ENCODE measurements at regions of chr19 and their contacts with region 1.

Region 1: DNA sequence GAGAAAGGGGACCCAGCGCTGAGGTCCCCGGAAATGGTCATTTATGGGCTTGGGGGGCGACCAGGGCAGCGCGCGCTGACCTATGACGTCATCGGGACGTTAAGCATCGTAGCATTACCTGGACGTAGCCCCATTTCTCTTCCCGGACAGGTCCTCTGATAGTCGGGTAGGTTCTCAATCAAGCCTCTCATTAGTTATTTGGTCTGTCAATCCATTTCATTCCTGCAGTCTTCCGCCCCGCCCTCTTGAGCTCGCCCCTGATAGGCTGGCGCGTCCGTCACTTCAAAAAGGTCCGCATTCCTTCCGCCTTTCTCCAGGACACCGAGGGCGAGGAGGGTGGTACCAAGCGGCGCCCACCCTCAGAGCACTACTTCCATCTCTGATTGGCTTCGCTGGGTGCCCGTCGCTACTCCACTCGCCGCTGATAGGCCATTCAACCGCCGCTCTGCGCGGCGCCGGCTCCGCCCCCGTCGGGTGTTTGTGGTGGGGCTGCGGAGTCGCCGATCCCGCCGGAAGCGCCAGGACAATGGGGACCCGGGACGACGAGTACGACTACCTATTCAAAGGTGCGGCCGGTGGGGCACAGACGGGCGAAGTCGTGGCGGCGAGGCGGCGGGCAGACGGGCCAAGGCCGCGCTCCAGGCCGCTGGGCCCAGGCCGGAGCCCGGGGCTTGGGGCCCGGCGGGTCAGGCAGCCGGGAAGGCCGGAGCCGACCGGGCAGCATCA is at the start of gene RAB11B:
- DNase-seq: peak; percentile 81 to 99 (median 98)
- ATAC-seq: peak; percentile 93
- H3K4me3 ChIP-seq: peak within 1 kb of the TSS; percentile 87
- H3K4me3 Mint-ChIP-seq: peak within 1 kb of the TSS; percentile 87 to 98 (median 92)
- H3K27ac ChIP-seq: peak within 1 kb of the TSS; percentile 98
- H3K27ac Mint-ChIP-seq: peak within 1 kb of the TSS; percentile 82 to 98 (median 93)
- H3K4me1 ChIP-seq: peaks cover 4 to 8% of the 10 kb centered on the region in 2 donors
- H3K4me1 Mint-ChIP-seq: peaks cover 18 to 36% (median 28%) of the 10 kb centered on the region in 7 donors
- H3K27me3 ChIP-seq: no peaks in the 10 kb centered on the region
- H3K27me3 Mint-ChIP-seq: no peaks in the 10 kb centered on the region
- total RNA-seq, gene RAB11B: 77.4 to 113 (median 103) TPM

Region 2: GRCh38 chr19:7919610-7920518 is 470.2 kb before region 1 on chr19 and contains the start of gene SNAPC2:
- CTCF ChIA-PET with region 1: no interaction called
- POLR2A ChIA-PET with region 1: interaction called, 4 read pairs
- intact Hi-C with region 1: loop called in 1 of 2 experiments (anchors 5 kb)
- DNase-seq: peak; percentile 95 to 99 (median 98)
- ATAC-seq: peak; percentile 71
- H3K4me3 ChIP-seq: peak within 1 kb of the TSS; percentile 86
- H3K4me3 Mint-ChIP-seq: peak within 1 kb of the TSS; percentile 88 to 97 (median 94)
- H3K27ac ChIP-seq: peak within 1 kb of the TSS; percentile 75
- H3K27ac Mint-ChIP-seq: peak within 1 kb of the TSS; percentile 76 to 97 (median 92)
- H3K4me1 ChIP-seq: peaks cover 25 to 34% of the 10 kb centered on the region in 2 donors
- H3K4me1 Mint-ChIP-seq: peaks cover 15 to 52% (median 38%) of the 10 kb centered on the region in 7 donors
- H3K27me3 ChIP-seq: peaks cover 3 to 20% of the 10 kb centered on the region in 2 donors
- H3K27me3 Mint-ChIP-seq: peaks cover 12 to 33% (median 14%) of the 10 kb centered on the region in 5 donors
- total RNA-seq, gene SNAPC2: 12.3 to 24.4 (median 21.4) TPM

Region 3: GRCh38 chr19:8240274-8241229 is 149.5 kb before region 1 on chr19:
- CTCF ChIA-PET with region 1: no interaction called
- POLR2A ChIA-PET with region 1: no interaction called
- intact Hi-C with region 1: no loop called
- DNase-seq: peak in 1 of 9 donors; percentile 20
- ATAC-seq: peak; percentile 87
- H3K4me3 ChIP-seq: no peak overlapping the region
- H3K4me3 Mint-ChIP-seq: peak overlapping the region in 3 of 10 donors; percentile 4 to 60 (median 22)
- H3K27ac ChIP-seq: no peak overlapping the region
- H3K27ac Mint-ChIP-seq: peak overlapping the region in 5 of 9 donors; percentile 25 to 69 (median 55)
- H3K4me1 ChIP-seq: peaks cover 8 to 15% of the 10 kb centered on the region in 2 donors
- H3K4me1 Mint-ChIP-seq: peaks cover 9 to 35% (median 16%) of the 10 kb centered on the region in 7 donors
- H3K27me3 ChIP-seq: no peaks in the 10 kb centered on the region
- H3K27me3 Mint-ChIP-seq: no peaks in the 10 kb centered on the region

Region 4: GRCh38 chr19:8307965-8308866 is 81.8 kb before region 1 on chr19 and contains the start of gene CD320:
- CTCF ChIA-PET with region 1: no interaction called
- POLR2A ChIA-PET with region 1: no interaction called
- intact Hi-C with region 1: loop called (anchors 1 kb)
- DNase-seq: peak; percentile 84 to 90 (median 89)
- ATAC-seq: peak; percentile 95
- H3K4me3 ChIP-seq: peak within 1 kb of the TSS; percentile 83
- H3K4me3 Mint-ChIP-seq: peak within 1 kb of the TSS; percentile 90 to 97 (median 92)
- H3K27ac ChIP-seq: peak within 1 kb of the TSS; percentile 89
- H3K27ac Mint-ChIP-seq: peak within 1 kb of the TSS; percentile 79 to 98 (median 94)
- H3K4me1 ChIP-seq: peaks cover 20 to 22% of the 10 kb centered on the region in 2 donors
- H3K4me1 Mint-ChIP-seq: peaks cover 18 to 38% (median 35%) of the 10 kb centered on the region in 7 donors
- H3K27me3 ChIP-seq: no peaks in the 10 kb centered on the region
- H3K27me3 Mint-ChIP-seq: no peaks in the 10 kb centered on the region
- total RNA-seq, gene CD320: 20.5 to 52.0 (median 27.2) TPM

Region 5: DNA sequence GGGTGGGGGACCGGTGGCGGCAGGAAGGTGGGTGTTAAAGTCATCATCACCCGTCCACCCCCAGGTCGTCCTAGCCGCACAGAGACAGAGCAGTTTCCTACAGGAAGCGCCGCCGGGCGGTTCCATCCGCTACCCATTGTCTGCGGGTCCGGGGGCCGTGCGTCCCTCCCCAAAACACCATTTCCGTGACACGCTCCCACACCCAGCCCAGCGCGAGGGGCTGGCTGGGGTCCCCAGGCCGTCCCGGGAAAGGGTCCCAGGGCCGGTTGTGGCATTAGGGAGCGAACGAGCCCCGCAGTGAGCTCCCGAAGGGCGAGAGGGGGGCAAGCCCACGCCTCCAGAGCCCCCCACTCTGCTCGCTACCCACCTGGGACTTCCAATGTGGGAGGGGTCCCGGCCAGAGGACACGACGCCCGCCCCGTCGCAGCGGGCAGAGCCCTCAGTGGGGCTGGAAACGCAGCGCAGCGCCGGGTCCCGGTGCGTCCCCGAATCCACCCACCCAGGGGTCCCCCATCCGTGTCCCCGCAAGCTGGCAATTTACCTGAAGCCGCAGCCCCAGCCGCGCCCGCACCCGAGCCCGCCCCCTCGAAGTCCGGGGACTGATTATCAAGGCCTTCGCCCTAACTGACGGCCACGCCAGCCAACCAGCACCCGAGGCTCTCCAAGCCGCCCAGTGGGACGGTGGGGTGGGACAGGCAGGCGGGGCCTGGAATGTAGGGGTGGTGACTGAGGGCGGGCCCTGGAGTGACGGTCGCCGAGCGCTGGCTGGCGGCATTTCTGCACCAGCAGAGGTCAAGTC is 47.2 kb before region 1 on chr19 and contains the start of gene KANK3:
- CTCF ChIA-PET with region 1: no interaction called
- POLR2A ChIA-PET with region 1: no interaction called
- intact Hi-C with region 1: loop called (anchors 2 kb)
- DNase-seq: peak; percentile 74 to 90 (median 86)
- ATAC-seq: peak; percentile 100
- H3K4me3 ChIP-seq: peak within 1 kb of the TSS; percentile 64
- H3K4me3 Mint-ChIP-seq: peak within 1 kb of the TSS; percentile 64 to 88 (median 82)
- H3K27ac ChIP-seq: peak within 1 kb of the TSS; percentile 56
- H3K27ac Mint-ChIP-seq: peak within 1 kb of the TSS in 5 of 9 donors; percentile 8 to 84 (median 67)
- H3K4me1 ChIP-seq: no peaks in the 10 kb centered on the region
- H3K4me1 Mint-ChIP-seq: peaks cover 0 to 13% (median 6%) of the 10 kb centered on the region in 7 donors
- H3K27me3 ChIP-seq: no peaks in the 10 kb centered on the region
- H3K27me3 Mint-ChIP-seq: peaks cover 5 to 46% (median 5%) of the 10 kb centered on the region in 5 donors
- total RNA-seq, gene KANK3: 1.3 to 4.4 (median 1.8) TPM

Region 6: DNA sequence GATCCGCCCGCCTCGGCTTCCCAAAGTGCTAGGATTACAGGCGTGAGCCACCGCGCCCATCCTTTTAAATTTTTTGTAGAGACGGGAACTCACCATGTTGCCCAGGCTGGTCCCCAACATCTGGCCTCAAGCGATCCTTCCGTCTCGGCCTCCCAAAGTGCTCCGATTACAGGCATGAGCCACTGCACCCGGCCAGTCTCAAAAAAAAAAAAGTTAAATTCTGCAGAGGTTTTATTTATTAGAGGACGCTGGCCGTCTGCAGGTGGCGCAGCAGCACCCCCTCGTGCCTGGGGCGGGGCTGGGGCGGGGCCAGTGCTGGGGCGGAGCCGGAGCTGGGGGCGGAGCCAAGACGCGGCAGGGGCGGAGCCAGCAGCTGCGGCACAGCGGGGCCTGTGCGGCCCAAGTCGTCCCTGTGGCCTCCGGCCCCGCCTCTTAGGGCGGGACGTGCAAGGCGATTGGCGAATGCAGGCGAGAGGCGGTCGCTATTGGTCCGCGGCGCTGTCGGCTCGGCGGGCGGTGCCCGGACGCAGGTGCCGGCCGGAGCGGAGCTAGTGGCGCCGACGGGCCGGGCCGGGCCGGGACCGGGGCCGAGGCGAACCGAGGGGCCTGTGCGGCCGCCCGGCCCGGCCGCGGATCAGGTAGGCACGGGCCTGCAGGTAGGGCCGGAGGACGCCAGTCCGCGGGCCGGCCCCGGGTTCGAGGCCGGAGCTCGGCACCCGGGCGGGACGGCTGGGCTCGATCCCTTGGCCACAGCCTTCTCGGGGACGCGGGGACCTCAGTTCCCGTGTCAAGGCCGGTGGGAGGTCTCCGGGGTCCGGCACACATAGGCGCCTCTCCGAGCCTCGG is 23.0 kb after region 1 on chr19 and contains the start of gene MARCHF2:
- CTCF ChIA-PET with region 1: interaction called, 3 read pairs
- POLR2A ChIA-PET with region 1: interaction called, 17 read pairs
- intact Hi-C with region 1: loop called (anchors 1 kb)
- DNase-seq: peak; percentile 91 to 96 (median 93)
- ATAC-seq: peak; percentile 100
- H3K4me3 ChIP-seq: peak within 1 kb of the TSS; percentile 72
- H3K4me3 Mint-ChIP-seq: peak within 1 kb of the TSS; percentile 58 to 85 (median 71)
- H3K27ac ChIP-seq: peak within 1 kb of the TSS; percentile 76
- H3K27ac Mint-ChIP-seq: peak within 1 kb of the TSS in 6 of 9 donors; percentile 11 to 84 (median 34)
- H3K4me1 ChIP-seq: peaks cover 0 to 6% of the 10 kb centered on the region in 2 donors
- H3K4me1 Mint-ChIP-seq: peaks cover 0 to 15% (median 13%) of the 10 kb centered on the region in 7 donors
- H3K27me3 ChIP-seq: no peaks in the 10 kb centered on the region
- H3K27me3 Mint-ChIP-seq: no peaks in the 10 kb centered on the region
- total RNA-seq, gene MARCHF2: 18.0 to 42.1 (median 23.4) TPM

Region 7: GRCh38 chr19:8569066-8569771 is 179.2 kb after region 1 on chr19:
- CTCF ChIA-PET with region 1: no interaction called
- POLR2A ChIA-PET with region 1: no interaction called
- intact Hi-C with region 1: loop called in 1 of 2 experiments (anchors 1 kb)
- DNase-seq: peak in 3 of 9 donors; percentile 19 to 71 (median 36)
- ATAC-seq: peak; percentile 76
- H3K4me3 ChIP-seq: peak overlapping the region; percentile 44
- H3K4me3 Mint-ChIP-seq: peak overlapping the region; percentile 66 to 88 (median 74)
- H3K27ac ChIP-seq: peak overlapping the region; percentile 59
- H3K27ac Mint-ChIP-seq: peak overlapping the region; percentile 88 to 98 (median 92)
- H3K4me1 ChIP-seq: peaks cover 46 to 72% of the 10 kb centered on the region in 2 donors
- H3K4me1 Mint-ChIP-seq: peaks cover 32 to 80% (median 64%) of the 10 kb centered on the region in 7 donors
- H3K27me3 ChIP-seq: no peaks in the 10 kb centered on the region
- H3K27me3 Mint-ChIP-seq: peaks cover 0 to 2% (median 0%) of the 10 kb centered on the region in 5 donors

Region 8: GRCh38 chr19:8832132-8833021 is 442.3 kb after region 1 on chr19 and contains the starts of genes MBD3L1 and ZNF558:
- CTCF ChIA-PET with region 1: no interaction called
- POLR2A ChIA-PET with region 1: no interaction called
- intact Hi-C with region 1: loop called in 1 of 2 experiments (anchors 1 kb)
- DNase-seq: peak; percentile 99 to 100 (median 99)
- ATAC-seq: peak; percentile 92
- H3K4me3 ChIP-seq: peak within 1 kb of the TSS; percentile 79
- H3K4me3 Mint-ChIP-seq: peak within 1 kb of the TSS; percentile 86 to 98 (median 90)
- H3K27ac ChIP-seq: peak within 1 kb of the TSS; percentile 93
- H3K27ac Mint-ChIP-seq: peak within 1 kb of the TSS; percentile 93 to 99 (median 96)
- H3K4me1 ChIP-seq: peaks cover 9 to 11% of the 10 kb centered on the region in 2 donors
- H3K4me1 Mint-ChIP-seq: peaks cover 6 to 38% (median 24%) of the 10 kb centered on the region in 7 donors
- H3K27me3 ChIP-seq: no peaks in the 10 kb centered on the region
- H3K27me3 Mint-ChIP-seq: peaks cover 0 to 16% (median 0%) of the 10 kb centered on the region in 5 donors
- total RNA-seq, gene MBD3L1: not detected
- total RNA-seq, gene ZNF558: 18.7 to 44.9 (median 26.3) TPM

Measured in naive thymus-derived CD4-positive, alpha-beta T cell (primary cell).